Cardiac septum (tissue), 1 donor: ENCODE measurements at regions of chr1 and their contacts with region 1.

Region 1: DNA sequence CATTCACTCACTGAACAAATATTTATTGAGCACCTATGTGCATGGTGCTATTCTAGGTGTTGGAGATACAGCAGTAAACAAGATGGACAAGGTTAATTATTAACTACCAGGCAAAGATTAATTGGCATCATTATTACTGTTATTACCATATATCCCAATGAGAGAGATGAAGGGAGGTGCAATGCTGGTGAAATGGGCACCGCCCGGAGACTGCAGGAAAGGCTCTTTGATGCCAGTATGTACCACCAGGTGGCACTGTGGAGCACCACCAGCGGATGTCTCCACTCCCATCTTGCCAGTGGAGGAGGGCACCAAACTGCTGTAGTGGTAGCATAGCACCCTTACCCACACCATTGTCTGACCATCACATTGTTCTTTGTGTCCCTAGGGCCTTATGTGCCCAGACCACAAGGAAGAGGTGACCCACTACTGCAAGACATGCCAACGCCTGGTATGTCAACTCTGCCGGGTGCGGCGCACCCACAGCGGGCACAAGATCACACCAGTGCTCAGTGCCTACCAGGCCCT is 3.0 kb downstream of the TRIM46 start:
- DNase-seq: peak; percentile 89

Region 2: DNA sequence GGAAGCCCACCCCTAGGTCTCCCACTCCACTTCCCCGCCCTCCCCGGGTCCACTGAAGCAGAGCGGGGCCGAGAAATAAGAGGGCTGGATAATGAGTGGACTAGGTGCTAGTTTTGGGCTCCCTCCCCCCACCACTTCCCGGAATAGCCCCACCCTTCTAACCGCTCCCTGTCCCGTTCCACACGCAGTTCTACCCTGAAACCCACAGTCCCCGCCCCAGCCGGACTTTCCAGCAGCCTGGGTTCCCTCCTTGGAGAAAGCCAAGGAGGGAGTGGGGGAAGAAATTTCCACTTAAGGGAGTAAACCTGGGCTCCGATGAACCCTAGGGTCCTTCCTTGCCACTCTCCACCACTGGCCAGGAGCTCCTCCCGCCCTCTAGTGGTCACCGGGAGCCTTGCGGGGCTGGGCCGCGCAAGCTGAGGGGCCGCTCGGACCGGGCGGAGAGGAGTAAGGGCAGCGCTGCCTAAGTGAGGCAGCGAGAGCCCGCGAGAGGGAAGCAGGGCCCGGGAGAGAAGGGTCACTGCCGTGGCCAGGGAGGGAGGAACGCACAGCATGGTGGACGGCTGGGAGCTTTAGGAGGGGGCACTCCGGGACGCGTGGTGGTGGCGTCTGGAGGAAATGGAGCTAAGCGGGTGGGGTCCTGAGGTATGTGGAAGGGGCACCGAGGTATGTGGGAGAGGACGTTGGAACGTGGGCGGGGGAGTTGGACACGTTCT is 16.8 kb after region 1 on chr1:
- intact Hi-C with region 1: loop called (anchors 1 kb)
- DNase-seq: peak; percentile 93

Region 3: DNA sequence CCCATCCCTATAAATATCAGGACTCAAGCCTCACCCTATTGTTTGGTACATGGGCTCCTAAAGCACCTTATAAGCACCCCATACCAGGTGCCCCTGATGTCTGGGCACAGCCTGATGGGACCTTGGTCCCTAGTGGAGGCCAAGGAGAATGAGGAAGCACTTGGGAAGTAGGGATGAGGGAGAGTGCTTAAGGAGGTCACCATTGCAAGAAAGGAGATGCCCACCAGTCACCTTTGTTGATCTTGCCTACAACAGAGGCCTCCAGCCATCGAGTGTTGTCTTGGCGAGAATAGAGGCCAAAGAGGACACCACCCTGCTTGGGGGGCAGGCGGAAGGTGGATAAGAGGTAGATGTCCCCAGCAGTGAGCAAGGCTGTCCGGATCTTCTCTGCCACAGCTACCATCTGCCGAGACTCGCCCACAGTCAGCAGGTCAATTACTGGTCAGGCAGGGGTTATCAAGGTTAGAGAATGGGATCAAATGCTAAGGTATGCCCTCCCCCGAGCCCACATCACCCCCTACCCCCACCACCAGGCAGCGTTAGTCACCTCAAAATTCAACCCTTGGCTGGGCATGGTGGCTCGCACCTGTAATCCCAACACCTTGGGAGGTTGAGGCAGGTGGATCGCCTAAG is 29.5 kb after region 1 on chr1:
- intact Hi-C with region 1: no loop called
- DNase-seq: no peak

Region 4: GRCh38 chr1:155227261-155228095 is 50.9 kb after region 1 on chr1:
- intact Hi-C with region 1: loop called (anchors 5 kb)
- DNase-seq: peak; percentile 98